ENCODE measurements at regions of chr10 and their contacts with region 1.

Region 1: GRCh38 chr10:86682667-86683066 is 14.4 kb downstream of the LDB3 start:
- DNase-seq: no peak
- ATAC-seq: no peak

Region 2: GRCh38 chr10:85778074-85778473 is 904.6 kb before region 1 on chr10:
- intact Hi-C with region 1: no loop called
- DNase-seq: no peak
- ATAC-seq: no peak

Region 3: GRCh38 chr10:86664341-86665217 is 18.1 kb before region 1 on chr10:
- intact Hi-C with region 1: loop called (anchors 2 kb)
- DNase-seq: peak; percentile 83
- ATAC-seq: peak; percentile 51

Region 4: GRCh38 chr10:86747796-86748581 is 65.3 kb after region 1 on chr10:
- intact Hi-C with region 1: no loop called
- DNase-seq: no peak
- ATAC-seq: no peak